Activated CD8-positive, alpha-beta T cell treated with anti-CD3 and anti-CD28 coated beads, Interleukin-2, amount 10 ng/mL, durations not matched to agents 7 days and 5 days (primary cell): ENCODE measurements at regions of chr17 and their contacts with region 1.

Region 1: DNA sequence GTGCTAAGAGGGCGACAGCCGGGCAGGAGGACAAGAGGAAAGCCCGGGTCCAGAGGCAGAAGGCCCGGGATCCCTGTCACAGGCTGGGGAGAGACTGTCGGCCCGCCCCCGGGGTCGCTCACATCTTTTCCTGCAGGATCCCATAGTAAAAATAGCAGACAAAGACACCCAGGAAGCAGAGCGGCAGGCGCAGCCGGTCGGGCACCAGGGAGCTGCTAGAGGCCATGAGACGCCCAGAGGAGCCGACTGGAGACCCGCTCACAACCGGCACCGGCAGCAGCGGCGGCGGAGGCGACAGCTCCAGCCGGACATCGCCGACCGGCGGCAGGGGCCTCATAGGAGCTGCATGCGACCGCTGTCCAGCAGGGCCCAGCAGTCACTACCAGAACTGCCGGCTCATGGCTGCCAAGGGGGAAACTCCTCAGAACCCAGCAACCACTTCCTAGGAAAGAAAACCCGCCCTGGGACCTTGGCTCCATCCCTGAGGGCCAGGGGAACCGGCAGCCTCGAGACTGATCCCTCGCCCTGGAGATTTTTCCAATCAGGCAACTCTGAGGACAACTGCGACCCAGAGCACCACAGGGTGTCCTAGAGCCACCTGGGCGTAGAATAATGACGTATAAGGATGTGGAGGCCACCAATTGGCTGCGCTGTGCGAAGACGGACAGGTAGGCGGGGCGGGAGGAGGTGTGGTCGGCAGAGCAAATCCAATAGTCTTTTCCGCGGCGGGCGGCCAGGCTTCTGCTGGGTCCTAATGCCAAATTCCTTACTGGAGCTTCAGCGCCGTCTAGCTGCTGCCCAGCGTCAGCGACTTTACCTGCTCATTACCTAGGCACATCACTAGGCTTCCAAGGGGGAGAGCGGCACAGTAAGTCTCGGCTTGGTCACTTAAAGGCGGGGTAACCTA is at the start of gene SLC35B1:
- DNase-seq: peak; percentile 99
- ATAC-seq: peak; percentile 99
- H3K4me3 Mint-ChIP-seq: peak within 1 kb of the TSS; percentile 94
- H3K27ac Mint-ChIP-seq: peak within 1 kb of the TSS; percentile 97
- H3K4me1 Mint-ChIP-seq: peaks cover 42% of the 10 kb centered on the region
- H3K27me3 Mint-ChIP-seq: no peaks in the 10 kb centered on the region
- total RNA-seq, gene SLC35B1: 50.7 to 62.6 TPM

Region 2: GRCh38 chr17:49567871-49568694 is 139.8 kb before region 1 on chr17:
- CTCF ChIA-PET with region 1: interaction called, 514 read pairs
- POLR2A ChIA-PET with region 1: interaction called, 5 read pairs
- DNase-seq: peak; percentile 88
- ATAC-seq: peak; percentile 50
- H3K4me3 Mint-ChIP-seq: peak overlapping the region; percentile 56
- H3K27ac Mint-ChIP-seq: no peak overlapping the region
- H3K4me1 Mint-ChIP-seq: peaks cover 35% of the 10 kb centered on the region
- H3K27me3 Mint-ChIP-seq: peaks cover 30% of the 10 kb centered on the region

Region 3: GRCh38 chr17:49730078-49730784 is 22.4 kb after region 1 on chr17:
- CTCF ChIA-PET with region 1: interaction called, 10 read pairs
- POLR2A ChIA-PET with region 1: interaction called, 4 read pairs
- DNase-seq: no peak
- ATAC-seq: no peak
- H3K4me3 Mint-ChIP-seq: no peak overlapping the region
- H3K27ac Mint-ChIP-seq: no peak overlapping the region
- H3K4me1 Mint-ChIP-seq: peaks cover 35% of the 10 kb centered on the region
- H3K27me3 Mint-ChIP-seq: no peaks in the 10 kb centered on the region

Region 4: DNA sequence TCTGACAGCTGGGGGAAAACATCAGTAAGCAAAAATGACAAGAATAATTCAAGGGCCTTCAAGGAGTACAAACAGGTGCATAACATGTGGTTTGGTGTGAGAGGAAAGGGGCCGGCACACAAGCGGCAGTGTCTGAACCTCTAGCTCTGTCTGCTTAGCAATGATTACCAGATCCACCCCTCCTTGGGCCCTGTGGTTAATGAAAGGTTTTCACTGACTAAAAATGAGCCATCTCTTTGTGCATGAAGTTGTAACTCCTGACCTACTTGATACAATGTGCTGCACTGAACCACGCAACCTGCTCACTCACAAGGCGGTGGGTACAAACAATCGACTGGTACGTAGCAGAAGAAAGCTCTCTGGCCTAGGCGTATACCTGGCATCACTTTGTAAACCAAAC is 40.9 kb after region 1 on chr17:
- CTCF ChIA-PET with region 1: interaction called, 37 read pairs
- POLR2A ChIA-PET with region 1: interaction called, 5 read pairs
- DNase-seq: peak; percentile 77
- ATAC-seq: peak; percentile 79
- H3K4me3 Mint-ChIP-seq: peak overlapping the region; percentile 68
- H3K27ac Mint-ChIP-seq: peak overlapping the region; percentile 89
- H3K4me1 Mint-ChIP-seq: peaks cover 77% of the 10 kb centered on the region
- H3K27me3 Mint-ChIP-seq: no peaks in the 10 kb centered on the region

Region 5: GRCh38 chr17:49779739-49780231 is 71.9 kb after region 1 on chr17:
- CTCF ChIA-PET with region 1: interaction called, 38 read pairs
- POLR2A ChIA-PET with region 1: interaction called, 6 read pairs
- DNase-seq: peak; percentile 40
- ATAC-seq: peak; percentile 28
- H3K4me3 Mint-ChIP-seq: no peak overlapping the region
- H3K27ac Mint-ChIP-seq: no peak overlapping the region
- H3K4me1 Mint-ChIP-seq: peaks cover 7% of the 10 kb centered on the region
- H3K27me3 Mint-ChIP-seq: peaks cover 2% of the 10 kb centered on the region